Heart right ventricle (tissue), 16 donors: ENCODE measurements at regions of chr6 and their contacts with region 1.

Region 1: DNA sequence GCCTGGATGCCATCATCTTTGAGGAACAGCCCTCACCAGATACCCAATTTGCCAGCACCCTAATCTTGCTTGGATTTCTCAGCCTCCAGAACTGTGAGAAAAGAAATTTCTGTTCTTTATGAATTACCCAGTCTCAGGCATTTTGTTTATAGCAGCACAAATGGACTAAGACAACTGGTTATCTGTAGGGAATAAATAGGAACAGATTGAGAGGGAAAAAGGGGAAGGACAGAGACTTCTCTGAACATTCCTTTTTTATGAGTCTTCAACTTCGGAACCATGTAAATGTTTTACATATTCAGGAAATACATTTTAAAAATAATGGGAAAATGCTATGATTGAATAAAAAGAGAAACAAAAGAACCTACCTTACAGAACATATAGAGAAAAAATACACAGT is 20.9 kb downstream of the KCTD20 start:
- DNase-seq: no peak
- ATAC-seq: no peak
- H3K4me3 ChIP-seq: no peak overlapping the region
- H3K27ac ChIP-seq: no peak overlapping the region
- H3K4me1 ChIP-seq: peaks cover 2 to 32% (median 26%) of the 10 kb centered on the region in 9 donors
- H3K27me3 ChIP-seq: no peaks in the 10 kb centered on the region
- CTCF ChIP-seq: no peak

Region 2: GRCh38 chr6:36514554-36515456 is 51.1 kb after region 1 on chr6:
- intact Hi-C with region 1: loop called in 1 of 10 experiments (anchors 10 kb)
- DNase-seq: no peak
- ATAC-seq: no peak
- H3K4me3 ChIP-seq: no peak overlapping the region
- H3K27ac ChIP-seq: no peak overlapping the region
- H3K4me1 ChIP-seq: peaks cover 0 to 13% (median 0%) of the 10 kb centered on the region in 9 donors
- H3K27me3 ChIP-seq: no peaks in the 10 kb centered on the region
- CTCF ChIP-seq: no peak

Region 3: GRCh38 chr6:36938536-36938935 is 474.9 kb after region 1 on chr6:
- intact Hi-C with region 1: no loop called
- DNase-seq: no peak
- ATAC-seq: peak in 4 of 8 donors; percentile 27 to 71 (median 54)
- H3K4me3 ChIP-seq: no peak overlapping the region
- H3K27ac ChIP-seq: no peak overlapping the region
- H3K4me1 ChIP-seq: no peaks in the 10 kb centered on the region
- H3K27me3 ChIP-seq: no peaks in the 10 kb centered on the region
- CTCF ChIP-seq: no peak

Region 4: DNA sequence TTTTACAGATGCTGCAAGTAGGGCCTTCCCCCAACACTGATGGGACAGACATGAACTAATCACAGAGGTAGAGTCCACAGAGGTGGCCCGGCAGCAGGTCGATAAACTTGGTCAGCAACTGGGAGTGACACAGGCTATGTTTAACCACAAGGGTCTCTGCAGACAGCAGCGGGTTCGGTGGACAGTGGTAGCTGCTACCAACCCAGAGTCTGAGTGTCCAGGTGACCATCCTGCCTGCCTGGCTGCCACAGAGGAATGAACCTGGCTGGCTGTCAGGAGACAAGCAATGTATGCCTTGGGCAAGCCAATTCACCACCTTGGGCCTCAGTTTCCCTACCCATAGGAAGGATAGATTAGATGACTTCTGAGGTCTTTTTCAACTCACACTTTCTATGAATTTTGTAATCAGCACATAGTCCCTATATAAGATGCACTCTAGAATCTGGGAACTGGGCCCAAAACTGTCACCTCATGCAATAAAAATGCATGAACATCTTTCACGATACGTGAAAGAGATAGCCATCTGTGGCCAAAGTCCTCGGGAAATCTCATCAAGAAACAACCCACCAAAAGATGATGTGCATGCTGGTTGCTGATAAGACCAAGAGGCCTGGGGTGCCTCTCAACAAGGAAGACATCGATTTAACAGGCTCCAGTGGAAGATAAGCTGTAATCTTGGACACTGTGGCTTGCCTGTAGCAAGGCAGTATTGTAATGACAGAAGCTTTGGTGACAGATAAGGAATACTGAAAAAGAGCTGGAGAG is 1203.6 kb after region 1 on chr6:
- intact Hi-C with region 1: loop called in 1 of 10 experiments (anchors 5 kb)
- DNase-seq: no peak
- ATAC-seq: no peak
- H3K4me3 ChIP-seq: no peak overlapping the region
- H3K27ac ChIP-seq: no peak overlapping the region
- H3K4me1 ChIP-seq: peaks cover 0 to 12% (median 0%) of the 10 kb centered on the region in 9 donors
- H3K27me3 ChIP-seq: no peaks in the 10 kb centered on the region
- CTCF ChIP-seq: no peak